ENCODE measurements at regions of chr5 and their contacts with region 1.

Region 1: GRCh38 chr5:76601470-76601869 is 21.7 kb downstream of the F2RL2 start:
- DNase-seq: peak; percentile 30
- ATAC-seq: peak; percentile 45
- H3K4me3 Mint-ChIP-seq: no peak overlapping the region
- H3K27ac Mint-ChIP-seq: no peak overlapping the region
- H3K4me1 Mint-ChIP-seq: peaks cover 2% of the 10 kb centered on the region
- H3K27me3 Mint-ChIP-seq: no peaks in the 10 kb centered on the region
- CTCF ChIP-seq: peak; percentile 72

Region 2: GRCh38 chr5:76615759-76616158 is 14.3 kb after region 1 on chr5:
- CTCF ChIA-PET with region 1: interaction called, 12 read pairs
- POLR2A ChIA-PET with region 1: no interaction called
- intact Hi-C with region 1: no loop called
- DNase-seq: no peak
- ATAC-seq: no peak
- H3K4me3 Mint-ChIP-seq: no peak overlapping the region
- H3K27ac Mint-ChIP-seq: no peak overlapping the region
- H3K4me1 Mint-ChIP-seq: no peaks in the 10 kb centered on the region
- H3K27me3 Mint-ChIP-seq: no peaks in the 10 kb centered on the region
- CTCF ChIP-seq: no peak

Region 3: GRCh38 chr5:76641514-76642120 is 40.1 kb after region 1 on chr5:
- CTCF ChIA-PET with region 1: interaction called, 14 read pairs
- POLR2A ChIA-PET with region 1: no interaction called
- intact Hi-C with region 1: loop called (anchors 1 kb)
- DNase-seq: peak; percentile 83
- ATAC-seq: peak; percentile 60
- H3K4me3 Mint-ChIP-seq: no peak overlapping the region
- H3K27ac Mint-ChIP-seq: no peak overlapping the region
- H3K4me1 Mint-ChIP-seq: peaks cover 6% of the 10 kb centered on the region
- H3K27me3 Mint-ChIP-seq: no peaks in the 10 kb centered on the region
- CTCF ChIP-seq: peak; percentile 83

Measured in activated CD8-positive, alpha-beta T cell treated with anti-CD3 and anti-CD28 coated beads for 36 hours (primary cell).